ENCODE measurements at regions of chr10 and their contacts with region 1.

Region 1: GRCh38 chr10:91797874-91798648 is at the start of gene TNKS2:
- DNase-seq: peak; percentile 75
- ATAC-seq: peak; percentile 87
- H3K4me3 ChIP-seq: peak within 1 kb of the TSS; percentile 84
- H3K27ac ChIP-seq: peak within 1 kb of the TSS; percentile 84
- H3K4me1 ChIP-seq: peaks cover 9% of the 10 kb centered on the region; the same call in 1 of the 2 replicates
- H3K27me3 ChIP-seq: no peaks in the 10 kb centered on the region; a peak in 1 of 4 replicates
- CTCF ChIP-seq: no peak
- EP300 ChIP-seq: no peak
- POLR2A ChIP-seq: peak; percentile 87
- RAD21 ChIP-seq: no peak
- polyA plus RNA-seq, gene TNKS2: 2.9 to 3.0 TPM

Region 2: DNA sequence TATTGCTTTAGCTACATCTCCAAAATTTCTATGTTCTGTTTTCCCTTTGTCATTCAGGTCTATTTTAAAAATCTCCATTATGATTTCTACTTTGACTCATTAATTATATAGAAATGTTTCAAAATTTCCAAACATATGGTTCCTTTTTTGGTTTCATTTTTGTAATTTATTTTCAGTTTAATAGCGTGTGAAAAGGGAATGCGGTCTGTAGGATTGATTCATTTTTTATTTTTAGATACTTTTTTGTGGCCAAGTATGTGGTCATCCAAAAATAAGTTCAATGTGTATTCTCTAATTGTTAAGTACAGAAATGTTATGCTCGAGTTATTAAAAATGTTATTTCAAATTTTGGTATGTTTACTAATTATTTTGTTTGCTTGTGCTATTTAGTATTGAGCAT is 804.7 kb before region 1 on chr10:
- CTCF ChIA-PET with region 1: no interaction called
- POLR2A ChIA-PET with region 1: no interaction called
- RAD21 ChIA-PET with region 1: no interaction called
- SMC1A ChIA-PET with region 1: no interaction called
- in situ Hi-C with region 1: no loop called
- intact Hi-C with region 1: loop called (anchors 5 kb)
- DNase-seq: no peak
- ATAC-seq: peak; percentile 50
- H3K4me3 ChIP-seq: peak overlapping the region; percentile 66
- H3K27ac ChIP-seq: peak overlapping the region; percentile 88
- H3K4me1 ChIP-seq: peaks cover 20% of the 10 kb centered on the region
- H3K27me3 ChIP-seq: no peaks in the 10 kb centered on the region
- CTCF ChIP-seq: no peak
- EP300 ChIP-seq: peak; percentile 41 to 86; a peak in 2 of 4 replicates
- POLR2A ChIP-seq: no peak
- RAD21 ChIP-seq: no peak

Region 3: DNA sequence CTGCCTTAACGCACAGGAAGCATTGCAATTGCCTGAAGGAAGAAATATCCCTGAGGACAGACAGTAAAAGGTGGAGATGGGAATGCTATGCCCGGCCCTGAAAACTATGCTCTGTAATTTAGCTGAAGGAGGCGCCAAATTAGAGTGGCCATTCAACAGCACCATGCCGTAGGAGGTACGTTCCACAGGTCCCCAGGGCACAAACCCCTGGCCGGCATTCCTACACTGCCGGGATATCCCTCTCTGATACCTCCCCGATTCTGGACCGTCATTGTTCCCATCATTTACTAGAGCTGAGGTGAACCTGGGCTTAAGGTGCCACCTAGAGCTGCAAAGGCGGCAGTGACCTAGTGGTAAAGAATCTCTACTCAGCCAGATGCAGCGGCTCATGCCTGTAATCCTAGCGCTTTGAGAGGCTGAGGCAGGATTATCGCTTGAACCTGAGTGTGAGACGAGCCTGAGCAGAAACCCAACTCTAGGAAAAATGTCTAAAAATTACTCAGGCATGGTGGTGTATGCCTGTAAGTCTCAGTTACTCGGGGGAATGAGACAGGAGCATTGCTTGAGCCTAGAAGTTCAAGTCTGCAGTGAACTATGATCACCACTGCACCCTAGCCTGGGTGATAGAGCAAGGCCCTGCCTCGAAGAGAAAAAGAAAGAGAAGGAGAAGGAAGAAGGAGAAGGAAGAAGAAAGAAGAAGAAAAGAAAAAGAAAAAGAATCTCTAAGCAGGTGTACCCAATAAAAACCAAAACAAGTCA is 52.8 kb before region 1 on chr10:
- CTCF ChIA-PET with region 1: no interaction called
- POLR2A ChIA-PET with region 1: no interaction called
- RAD21 ChIA-PET with region 1: no interaction called
- SMC1A ChIA-PET with region 1: no interaction called
- in situ Hi-C with region 1: no loop called
- intact Hi-C with region 1: no loop called
- DNase-seq: no peak
- ATAC-seq: peak; percentile 54; the same call in 2 of the 3 replicates
- H3K4me3 ChIP-seq: no peak overlapping the region
- H3K27ac ChIP-seq: no peak overlapping the region
- H3K4me1 ChIP-seq: no peaks in the 10 kb centered on the region
- H3K27me3 ChIP-seq: no peaks in the 10 kb centered on the region; a peak in 3 of 4 replicates
- CTCF ChIP-seq: peak; percentile 23 to 50 (median 33); a peak in 3 of 6 replicates
- EP300 ChIP-seq: no peak
- POLR2A ChIP-seq: no peak
- RAD21 ChIP-seq: peak; percentile 52

Region 4: DNA sequence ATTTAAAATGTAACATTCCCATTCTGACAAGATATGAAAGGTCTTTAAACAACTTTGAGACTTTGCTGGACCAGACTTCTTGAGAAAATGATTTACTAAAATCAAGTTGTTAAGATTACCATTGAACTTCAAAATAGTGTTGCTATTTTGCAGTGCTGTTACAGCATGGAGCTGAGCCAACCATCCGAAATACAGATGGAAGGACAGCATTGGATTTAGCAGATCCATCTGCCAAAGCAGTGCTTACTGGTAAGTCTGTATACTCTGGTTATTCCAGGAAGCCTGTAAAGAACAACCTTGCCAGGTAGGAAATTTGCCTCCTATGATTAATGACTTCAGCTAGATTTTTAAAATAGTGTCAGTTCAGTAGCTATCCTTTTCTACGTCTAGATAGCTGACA is 18.9 kb after region 1 on chr10:
- CTCF ChIA-PET with region 1: interaction called, 11 read pairs
- POLR2A ChIA-PET with region 1: interaction called, 3 read pairs
- RAD21 ChIA-PET with region 1: interaction called, 3 read pairs
- SMC1A ChIA-PET with region 1: interaction called, 6 read pairs
- in situ Hi-C with region 1: no loop called
- intact Hi-C with region 1: no loop called
- DNase-seq: no peak
- ATAC-seq: no peak
- H3K4me3 ChIP-seq: no peak overlapping the region
- H3K27ac ChIP-seq: no peak overlapping the region
- H3K4me1 ChIP-seq: no peaks in the 10 kb centered on the region
- H3K27me3 ChIP-seq: no peaks in the 10 kb centered on the region
- CTCF ChIP-seq: no peak
- EP300 ChIP-seq: no peak
- POLR2A ChIP-seq: no peak
- RAD21 ChIP-seq: no peak

Region 5: DNA sequence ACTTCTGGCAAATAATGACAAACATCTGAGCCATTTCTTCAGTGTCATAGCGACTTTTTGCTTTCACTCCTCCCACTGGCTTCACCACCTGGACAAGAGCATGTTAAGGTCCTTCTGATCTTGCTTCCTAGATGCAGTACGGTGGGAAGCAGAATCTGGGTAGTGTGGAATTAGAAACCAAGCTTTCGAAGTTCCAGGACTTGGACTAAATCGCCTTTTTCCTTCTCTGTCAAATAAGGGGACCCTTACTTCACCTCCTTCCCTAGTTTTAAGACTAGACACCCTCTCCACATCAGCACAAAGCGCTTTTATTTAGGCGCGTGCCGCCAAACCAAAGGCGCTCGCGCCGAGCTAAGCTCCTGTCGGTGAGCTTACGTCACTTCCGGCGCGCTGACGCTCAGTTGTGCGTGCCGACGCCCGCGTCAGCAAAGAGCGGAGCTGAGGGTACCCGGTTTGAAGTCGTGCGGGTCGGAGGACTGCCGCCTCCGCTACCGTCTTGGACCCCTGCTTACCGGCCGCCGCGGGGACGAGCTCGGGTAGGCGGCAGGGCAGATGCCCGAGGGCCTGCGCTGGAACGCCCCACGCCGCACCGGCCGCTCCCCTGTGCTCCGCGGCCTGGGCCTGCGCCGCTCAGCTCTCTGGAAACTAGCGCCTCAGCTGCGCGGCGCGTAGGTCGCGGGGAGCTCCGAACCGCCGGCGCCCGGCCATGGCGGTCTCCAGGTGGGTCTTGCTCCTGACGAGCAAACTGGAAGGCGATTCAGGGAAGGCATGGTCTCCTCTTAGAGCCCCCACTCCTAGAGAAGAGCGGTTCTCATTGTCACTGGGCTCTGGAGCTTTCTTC is 125.5 kb after region 1 on chr10 and contains the start of gene BTAF1:
- CTCF ChIA-PET with region 1: no interaction called
- POLR2A ChIA-PET with region 1: interaction called, 5 read pairs
- RAD21 ChIA-PET with region 1: interaction called, 6 read pairs
- SMC1A ChIA-PET with region 1: interaction called, 3 read pairs
- in situ Hi-C with region 1: no loop called
- intact Hi-C with region 1: loop called (anchors 5 kb)
- DNase-seq: peak; percentile 56
- ATAC-seq: peak; percentile 95
- H3K4me3 ChIP-seq: peak within 1 kb of the TSS; percentile 86
- H3K27ac ChIP-seq: peak within 1 kb of the TSS; percentile 88
- H3K4me1 ChIP-seq: no peaks in the 10 kb centered on the region
- H3K27me3 ChIP-seq: no peaks in the 10 kb centered on the region; a peak in 1 of 4 replicates
- CTCF ChIP-seq: no peak
- EP300 ChIP-seq: no peak
- POLR2A ChIP-seq: peak; percentile 95
- RAD21 ChIP-seq: no peak
- polyA plus RNA-seq, gene BTAF1: 11.8 to 12.8 TPM

Region 6: DNA sequence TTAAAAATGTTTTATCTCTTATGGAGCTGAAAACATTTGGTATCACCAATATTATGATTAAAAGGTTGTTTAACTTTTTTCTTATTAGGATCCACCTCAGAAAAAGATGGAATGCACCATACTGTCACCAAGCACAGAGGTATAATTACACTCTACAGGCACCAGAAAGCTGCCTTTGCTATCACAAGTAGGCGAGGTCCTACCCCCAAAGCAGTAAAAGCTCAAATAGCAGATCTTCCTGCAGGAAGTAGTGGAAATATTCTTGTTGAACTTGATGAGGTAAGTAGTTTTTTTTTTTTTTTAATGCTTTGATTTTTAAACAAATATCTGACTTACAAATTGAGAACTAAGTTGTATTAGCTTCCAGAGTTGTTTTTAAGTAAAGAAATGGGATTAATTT is 194.0 kb after region 1 on chr10:
- CTCF ChIA-PET with region 1: no interaction called
- POLR2A ChIA-PET with region 1: no interaction called
- RAD21 ChIA-PET with region 1: no interaction called
- SMC1A ChIA-PET with region 1: no interaction called
- in situ Hi-C with region 1: no loop called
- intact Hi-C with region 1: no loop called
- DNase-seq: no peak
- ATAC-seq: no peak
- H3K4me3 ChIP-seq: no peak overlapping the region
- H3K27ac ChIP-seq: no peak overlapping the region
- H3K4me1 ChIP-seq: no peaks in the 10 kb centered on the region
- H3K27me3 ChIP-seq: no peaks in the 10 kb centered on the region
- CTCF ChIP-seq: no peak
- EP300 ChIP-seq: no peak
- POLR2A ChIP-seq: no peak
- RAD21 ChIP-seq: no peak